ENCODE measurements at regions of chr4 and their contacts with region 1.

Region 1: GRCh38 chr4:76305971-76306881 is at the start of gene STBD1:
- DNase-seq: peak; percentile 68
- ATAC-seq: peak; percentile 89
- H3K4me3 ChIP-seq: peak within 1 kb of the TSS; percentile 79 to 99 (median 92)
- H3K27ac ChIP-seq: peak within 1 kb of the TSS; percentile 81
- H3K4me1 ChIP-seq: peaks cover 71% of the 10 kb centered on the region
- H3K27me3 ChIP-seq: no peaks in the 10 kb centered on the region; a peak in 1 of 5 replicates
- CTCF ChIP-seq: peak; percentile 15; the same call in 1 of the 2 replicates
- EP300 ChIP-seq: no peak
- POLR2A ChIP-seq: peak; percentile 34 to 76; a peak in 3 of 4 replicates
- RAD21 ChIP-seq: no peak
- total RNA-seq, gene STBD1: 3.5 and 4.3 TPM in 2 replicates

Region 2: GRCh38 chr4:76148142-76148865 is 157.9 kb before region 1 on chr4 and contains the start of gene NUP54:
- CTCF ChIA-PET with region 1: no interaction called
- POLR2A ChIA-PET with region 1: no interaction called
- in situ Hi-C with region 1: no loop called
- intact Hi-C with region 1: loop called (anchors 1 kb)
- DNase-seq: peak; percentile 91
- ATAC-seq: peak; percentile 98
- H3K4me3 ChIP-seq: peak within 1 kb of the TSS; percentile 86 to 97 (median 87)
- H3K27ac ChIP-seq: peak within 1 kb of the TSS; percentile 91
- H3K4me1 ChIP-seq: peaks cover 25% of the 10 kb centered on the region
- H3K27me3 ChIP-seq: no peaks in the 10 kb centered on the region; a peak in 1 of 5 replicates
- CTCF ChIP-seq: no peak; the same call in 1 of the 2 replicates
- EP300 ChIP-seq: peak; percentile 36 to 42; a peak in 1 of 4 replicates
- POLR2A ChIP-seq: peak; percentile 80 to 92
- RAD21 ChIP-seq: 0 out of 2 replicates have a peak, but pooled peaks have one; percentile 10
- total RNA-seq, gene NUP54: 69.3 and 90.0 TPM in 2 replicates

Region 3: DNA sequence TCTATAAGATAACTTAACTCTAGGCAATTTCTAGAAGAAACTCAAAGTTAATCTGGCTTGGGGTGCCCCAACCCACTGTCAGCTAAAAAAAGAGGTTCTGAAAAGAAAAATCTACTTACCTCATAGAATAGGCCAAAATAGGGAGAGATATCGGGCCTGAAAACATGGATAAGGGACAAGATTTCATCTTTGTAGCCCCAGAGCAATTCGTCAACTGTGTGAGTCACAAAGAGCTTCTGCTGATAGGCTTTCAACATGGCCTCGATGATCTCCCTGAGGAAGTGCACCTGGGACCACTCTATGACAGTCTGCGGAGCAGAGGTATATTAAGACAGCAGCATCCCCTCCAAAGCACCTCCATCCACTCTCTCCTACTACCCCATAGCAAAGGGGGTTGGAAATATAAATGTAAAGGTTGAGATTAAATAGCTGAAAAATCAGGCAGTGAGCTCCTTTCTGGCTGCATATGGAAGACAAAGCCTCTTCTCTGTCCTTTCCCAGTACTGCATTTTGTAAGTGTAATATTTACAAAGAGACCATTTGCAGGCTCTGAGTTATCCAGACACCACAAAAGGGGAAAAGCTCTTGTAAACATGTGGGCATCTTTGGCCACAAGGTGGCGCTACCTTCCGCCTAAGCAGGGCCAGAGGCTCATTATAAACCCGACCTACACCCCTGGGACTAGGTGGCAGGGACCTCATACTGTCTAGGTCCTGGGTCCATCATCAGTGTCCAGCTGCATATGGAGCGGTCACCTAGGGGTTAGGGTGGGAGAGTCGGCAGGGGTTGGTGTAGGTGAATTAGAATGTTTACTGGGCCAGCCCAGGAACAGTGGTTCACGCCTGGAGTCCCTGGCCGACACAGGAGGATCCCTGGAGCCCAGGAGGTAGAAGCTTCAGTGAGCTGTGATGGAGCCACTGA is 126.6 kb before region 1 on chr4:
- CTCF ChIA-PET with region 1: no interaction called
- POLR2A ChIA-PET with region 1: no interaction called
- in situ Hi-C with region 1: loop called (anchors 10 kb)
- intact Hi-C with region 1: loop called (anchors 2 kb)
- DNase-seq: peak; percentile 70
- ATAC-seq: peak; percentile 99
- H3K4me3 ChIP-seq: no peak overlapping the region
- H3K27ac ChIP-seq: no peak overlapping the region
- H3K4me1 ChIP-seq: no peaks in the 10 kb centered on the region
- H3K27me3 ChIP-seq: no peaks in the 10 kb centered on the region
- CTCF ChIP-seq: peak; percentile 91
- EP300 ChIP-seq: no peak
- POLR2A ChIP-seq: no peak
- RAD21 ChIP-seq: peak; percentile 84

Region 4: DNA sequence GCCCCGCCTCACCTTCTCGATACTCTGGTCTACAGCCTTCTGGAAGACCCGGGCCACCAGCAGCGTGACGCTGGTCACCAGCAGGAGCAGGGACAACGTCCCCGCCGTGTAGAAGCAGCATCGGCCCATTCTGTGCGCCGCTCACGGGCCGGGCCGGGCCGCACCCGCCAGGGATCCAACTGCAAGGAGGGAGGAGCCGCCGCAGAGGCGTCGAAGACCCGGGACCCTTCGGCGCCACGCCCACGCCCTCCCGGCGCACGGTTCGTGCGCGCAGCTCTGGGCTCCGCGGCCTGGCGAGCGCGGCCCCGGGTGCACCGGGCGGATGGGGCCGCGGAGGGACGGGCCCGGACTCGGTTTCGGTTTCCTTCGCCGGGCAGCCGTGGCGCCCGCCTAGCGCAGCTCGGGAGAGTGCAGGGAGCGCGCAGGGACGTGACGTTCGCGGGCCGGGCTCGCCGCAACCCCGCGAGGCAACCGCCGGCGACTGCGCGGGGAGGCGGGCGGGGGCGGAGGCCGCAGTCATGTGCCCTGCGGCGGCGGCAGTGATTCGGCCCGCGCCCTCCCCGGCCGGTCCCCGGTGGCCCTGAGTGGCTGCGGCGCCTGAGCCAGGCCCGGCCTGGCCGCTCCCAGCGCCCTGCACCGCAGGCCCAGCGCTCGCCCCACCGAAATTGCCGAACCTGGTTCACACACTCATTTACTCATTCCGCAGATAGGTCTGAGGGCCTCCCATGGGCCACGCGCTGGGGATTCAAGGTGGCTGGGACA is 92.6 kb before region 1 on chr4 and contains the start of gene SCARB2:
- CTCF ChIA-PET with region 1: no interaction called
- POLR2A ChIA-PET with region 1: interaction called, 4 read pairs
- in situ Hi-C with region 1: no loop called
- intact Hi-C with region 1: loop called (anchors 2 kb)
- DNase-seq: peak; percentile 61
- ATAC-seq: peak; percentile 96
- H3K4me3 ChIP-seq: peak within 1 kb of the TSS; percentile 72 to 86 (median 76)
- H3K27ac ChIP-seq: peak within 1 kb of the TSS; percentile 86
- H3K4me1 ChIP-seq: peaks cover 69% of the 10 kb centered on the region
- H3K27me3 ChIP-seq: no peaks in the 10 kb centered on the region; a peak in 1 of 5 replicates
- CTCF ChIP-seq: no peak
- EP300 ChIP-seq: no peak; a peak in 1 of 4 replicates
- POLR2A ChIP-seq: peak in 1 of 2 experiments; percentile 84; a peak in 2 of 4 replicates
- RAD21 ChIP-seq: peak; percentile 54
- total RNA-seq, gene SCARB2: 23.5 and 43.4 TPM in 2 replicates

Region 5: DNA sequence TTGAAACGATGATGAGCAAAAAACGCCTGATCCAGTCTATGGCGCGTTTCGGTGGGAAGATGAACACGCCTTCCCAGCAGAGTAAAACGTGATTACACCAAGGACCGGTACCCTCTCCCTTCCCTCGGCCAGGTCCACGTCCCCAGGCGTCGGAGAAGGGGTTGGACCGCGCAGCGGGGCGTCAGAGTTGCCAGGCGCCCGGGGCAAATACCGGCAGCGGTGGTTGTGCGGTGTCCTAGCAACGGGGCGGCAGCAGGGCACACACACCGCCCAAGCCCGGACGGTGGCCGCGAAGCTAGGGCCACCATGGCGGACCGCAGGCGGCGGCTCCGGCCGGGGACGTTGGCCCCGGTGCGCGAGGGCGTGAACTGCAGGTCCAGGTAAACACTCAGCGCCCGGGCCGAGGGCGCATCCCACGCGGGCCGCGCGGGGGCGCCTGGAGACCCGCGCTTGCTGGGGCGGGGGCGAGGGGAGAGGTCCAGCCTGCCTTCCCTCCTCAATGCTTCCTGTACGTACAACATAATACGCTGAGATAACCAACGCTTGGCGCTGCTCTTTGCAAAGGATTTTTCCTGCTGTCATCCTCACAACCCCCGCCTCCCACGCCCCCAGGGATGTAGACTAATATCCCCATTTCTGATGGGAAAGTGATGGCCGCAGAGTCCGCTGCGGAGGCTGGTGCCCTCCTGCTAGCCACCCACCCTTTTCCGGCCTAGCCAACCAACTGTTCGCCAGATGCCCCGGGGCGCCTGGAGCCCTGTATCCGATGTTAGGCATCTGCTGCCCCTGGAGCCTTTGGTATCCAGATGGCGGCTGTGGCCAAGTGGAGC is 54.6 kb before region 1 on chr4 and contains the start of gene FAM47E:
- CTCF ChIA-PET with region 1: no interaction called
- POLR2A ChIA-PET with region 1: interaction called, 4 read pairs
- in situ Hi-C with region 1: no loop called
- intact Hi-C with region 1: loop called (anchors 2 kb)
- DNase-seq: peak; percentile 57
- ATAC-seq: peak; percentile 99
- H3K4me3 ChIP-seq: peak within 1 kb of the TSS; percentile 39 to 69 (median 51)
- H3K27ac ChIP-seq: no peak within 1 kb of the TSS
- H3K4me1 ChIP-seq: peaks cover 13% of the 10 kb centered on the region
- H3K27me3 ChIP-seq: no peaks in the 10 kb centered on the region; a peak in 1 of 5 replicates
- CTCF ChIP-seq: peak; percentile 85
- EP300 ChIP-seq: no peak; a peak in 1 of 4 replicates
- POLR2A ChIP-seq: no peak
- RAD21 ChIP-seq: peak; percentile 96
- total RNA-seq, gene FAM47E: 0.29 and 0.33 TPM in 2 replicates

Region 6: DNA sequence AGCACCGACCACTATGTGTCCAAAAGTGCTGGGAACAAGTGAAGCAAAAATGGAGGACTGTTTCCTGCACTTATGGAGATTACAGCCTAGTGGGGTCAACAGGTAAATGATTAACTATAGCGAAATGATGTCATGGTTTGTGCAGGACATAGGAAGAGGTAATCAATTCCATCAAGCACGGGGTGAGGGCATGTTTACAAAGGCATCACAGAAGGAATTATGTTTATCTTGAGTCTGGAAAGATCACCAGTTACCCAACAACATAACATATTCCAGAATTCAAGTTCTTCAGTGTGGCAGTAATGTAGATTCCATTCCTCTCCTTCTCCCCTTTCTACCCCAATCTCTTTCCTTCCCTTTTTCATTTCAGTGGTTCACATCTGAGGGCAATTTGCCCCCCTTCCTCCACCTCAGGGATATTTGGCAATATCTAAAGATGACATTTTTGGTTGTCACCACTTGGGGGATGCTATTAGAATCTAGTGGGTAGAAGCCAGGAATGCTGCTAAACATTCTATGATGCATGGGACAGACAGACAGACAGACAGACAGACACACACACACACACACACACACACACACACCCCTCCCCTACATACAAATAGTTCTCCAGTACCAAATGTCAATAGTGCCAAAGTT is 30.6 kb before region 1 on chr4:
- CTCF ChIA-PET with region 1: no interaction called
- POLR2A ChIA-PET with region 1: interaction called, 22 read pairs
- in situ Hi-C with region 1: no loop called
- intact Hi-C with region 1: loop called (anchors 2 kb)
- DNase-seq: peak; percentile 76
- ATAC-seq: peak; percentile 84
- H3K4me3 ChIP-seq: no peak overlapping the region
- H3K27ac ChIP-seq: no peak overlapping the region
- H3K4me1 ChIP-seq: peaks cover 80% of the 10 kb centered on the region
- H3K27me3 ChIP-seq: no peaks in the 10 kb centered on the region
- CTCF ChIP-seq: no peak
- EP300 ChIP-seq: peak in 1 of 2 experiments; percentile 70; a peak in 1 of 4 replicates
- POLR2A ChIP-seq: no peak
- RAD21 ChIP-seq: no peak

Region 7: GRCh38 chr4:76377911-76378310 is 71.7 kb after region 1 on chr4:
- CTCF ChIA-PET with region 1: interaction called, 5 read pairs
- POLR2A ChIA-PET with region 1: interaction called, 5 read pairs
- in situ Hi-C with region 1: no loop called
- intact Hi-C with region 1: loop called (anchors 1 kb)
- DNase-seq: peak; percentile 44
- ATAC-seq: peak; percentile 81
- H3K4me3 ChIP-seq: no peak overlapping the region
- H3K27ac ChIP-seq: no peak overlapping the region
- H3K4me1 ChIP-seq: peaks cover 26% of the 10 kb centered on the region
- H3K27me3 ChIP-seq: no peaks in the 10 kb centered on the region
- CTCF ChIP-seq: peak; percentile 65
- EP300 ChIP-seq: no peak
- POLR2A ChIP-seq: no peak
- RAD21 ChIP-seq: peak; percentile 76